ENCODE measurements at regions of chr12 and their contacts with region 1.

Region 1: DNA sequence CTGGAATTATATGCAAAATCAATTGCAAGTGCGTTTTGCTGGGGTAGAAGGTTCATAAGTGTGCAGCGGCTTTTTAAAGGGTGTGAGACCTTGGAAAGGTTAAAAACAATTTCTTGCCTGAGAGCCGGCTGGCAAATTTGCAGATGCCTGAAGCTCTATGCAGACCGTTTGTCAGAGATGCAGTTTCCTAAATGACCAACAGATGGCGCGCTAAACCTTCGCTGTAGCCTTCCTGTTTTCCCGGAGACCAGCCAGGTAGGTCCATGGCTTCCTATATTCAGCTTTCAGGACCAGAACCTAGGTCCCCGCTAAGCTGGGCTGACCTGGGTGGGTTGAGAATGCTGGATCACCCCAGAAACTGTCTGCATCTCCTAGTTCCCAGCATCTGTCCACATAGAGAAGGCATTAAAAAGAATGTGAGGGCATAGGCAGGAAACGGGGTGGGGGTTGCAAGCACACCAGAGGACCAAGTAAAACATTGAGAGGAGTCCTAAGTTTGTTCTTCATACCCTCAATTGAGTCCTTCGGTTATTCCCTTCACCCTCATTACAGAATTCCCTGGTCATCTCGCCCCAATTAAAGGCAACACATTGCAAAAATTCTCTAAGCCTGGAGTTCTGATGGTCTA is 5.7 kb upstream of the NOS1 start:
- DNase-seq: peak; percentile 80

Region 2: DNA sequence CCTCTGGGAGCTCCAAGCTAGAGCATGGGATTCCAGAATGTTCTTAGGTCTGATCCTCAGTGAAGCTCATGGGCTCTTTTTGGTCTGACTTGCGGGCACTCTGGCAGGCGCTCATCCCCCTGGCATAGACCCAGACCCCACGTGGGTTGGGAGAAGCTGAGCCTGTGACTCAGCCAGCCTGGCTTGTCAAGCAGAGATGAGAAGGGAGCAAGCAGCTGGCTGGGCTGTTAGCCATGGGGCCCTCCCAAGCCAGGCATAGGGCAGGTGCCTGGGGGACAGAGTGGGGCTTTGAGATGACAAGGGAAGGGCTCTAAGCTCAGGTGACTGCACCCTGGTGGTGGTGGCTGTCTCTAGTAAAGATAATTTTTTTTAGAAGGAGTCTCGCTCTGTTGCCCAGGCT is 74.6 kb after region 1 on chr12:
- intact Hi-C with region 1: no loop called
- DNase-seq: peak; percentile 82

Region 3: DNA sequence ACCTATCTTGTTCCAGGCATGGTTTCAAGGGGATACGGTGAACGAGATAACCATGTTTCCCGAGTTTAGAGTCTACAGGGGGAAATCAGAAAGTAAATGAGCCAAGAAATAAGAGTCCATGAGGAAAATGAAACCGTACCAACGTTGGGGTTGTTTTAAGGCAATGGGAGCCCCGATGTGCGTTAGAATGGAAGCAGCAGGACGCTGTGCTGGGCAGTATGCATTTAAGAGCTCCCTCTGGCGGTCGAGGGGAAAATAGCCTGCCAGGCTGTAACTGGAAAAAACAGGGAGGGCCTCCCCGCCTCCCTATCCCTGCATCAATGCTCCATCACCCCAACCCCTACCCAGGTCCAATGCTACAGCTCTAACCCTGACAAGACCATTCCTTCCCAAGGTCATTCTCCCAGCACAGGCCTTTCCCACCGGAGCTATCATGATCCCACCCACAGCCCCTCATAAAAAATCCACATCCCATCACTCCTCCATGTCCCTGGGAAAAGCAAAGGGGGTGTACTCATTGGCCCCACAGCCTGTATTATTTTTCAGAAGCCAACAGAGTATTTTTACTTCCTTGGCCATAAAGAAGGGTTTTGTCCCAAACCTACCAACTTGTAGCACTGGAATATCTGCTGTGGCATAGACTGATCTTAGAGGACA is 220.6 kb after region 1 on chr12:
- intact Hi-C with region 1: loop called (anchors 2 kb)
- DNase-seq: no peak